Ovary (tissue), 10 donors: ENCODE measurements at regions of chr21 and their contacts with region 1.

Region 1: DNA sequence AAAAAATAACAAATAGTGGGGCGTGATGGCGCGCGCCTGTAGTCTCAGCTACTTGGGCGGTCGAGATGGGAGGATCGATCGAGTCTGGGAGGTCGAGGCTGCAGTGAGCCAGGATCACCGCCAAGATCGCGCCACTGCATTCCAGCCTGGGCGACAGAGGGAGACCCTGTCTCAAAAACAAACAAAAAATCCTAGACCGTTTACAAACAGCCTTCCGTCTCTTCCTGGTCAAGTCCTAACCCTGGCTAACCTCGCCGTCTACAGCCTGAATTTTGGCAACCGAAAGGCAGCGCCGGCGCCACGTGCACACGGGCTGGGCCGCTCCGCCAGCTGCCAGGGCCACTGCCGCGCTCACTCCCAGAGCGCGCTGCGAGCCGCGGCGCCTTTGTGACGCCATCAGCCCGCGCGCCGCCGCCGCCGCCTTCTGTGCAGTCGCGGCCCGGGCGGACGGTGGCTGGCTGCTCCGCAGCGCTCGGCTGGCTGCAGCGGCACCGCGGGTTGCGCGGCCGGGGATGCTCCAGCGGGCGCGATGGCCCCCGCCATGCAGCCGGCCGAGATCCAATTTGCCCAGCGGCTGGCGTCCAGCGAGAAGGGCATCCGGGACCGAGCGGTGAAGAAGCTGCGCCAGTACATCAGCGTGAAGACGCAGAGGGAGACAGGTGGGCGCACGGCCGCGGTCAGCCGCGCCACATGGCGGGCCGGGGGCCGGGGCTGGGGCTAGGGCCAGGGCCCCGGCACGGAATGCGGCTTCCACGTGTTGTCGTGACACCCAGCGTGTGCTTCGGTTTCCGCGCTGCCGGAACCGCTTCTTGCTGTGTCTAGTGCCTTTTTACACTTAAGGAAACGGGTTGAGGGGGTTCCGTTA is at the starts of genes HSF2BP and RRP1B:
- DNase-seq: peak; percentile 78 to 90 (median 83)
- H3K4me3 ChIP-seq: peak within 1 kb of the TSS; percentile 59
- H3K27ac ChIP-seq: peak within 1 kb of the TSS; percentile 2 to 87
- H3K4me1 ChIP-seq: no peaks in the 10 kb centered on the region
- H3K27me3 ChIP-seq: no peaks in the 10 kb centered on the region
- CTCF ChIP-seq: peak in 2 of 3 donors; percentile 33 to 38
- EP300 ChIP-seq: no peak
- POLR2A ChIP-seq: peak; percentile 64
- total RNA-seq, gene HSF2BP: 0.69 to 2.9 (median 1.5) TPM
- total RNA-seq, gene RRP1B: 17.3 to 31.8 (median 29.0) TPM

Region 2: GRCh38 chr21:42467140-42467983 is 1192.0 kb before region 1 on chr21:
- intact Hi-C with region 1: no loop called
- DNase-seq: no peak
- H3K4me3 ChIP-seq: no peak overlapping the region
- H3K27ac ChIP-seq: no peak overlapping the region
- H3K4me1 ChIP-seq: no peaks in the 10 kb centered on the region
- H3K27me3 ChIP-seq: no peaks in the 10 kb centered on the region
- CTCF ChIP-seq: no peak
- EP300 ChIP-seq: no peak
- POLR2A ChIP-seq: no peak

Region 3: GRCh38 chr21:43949499-43950208 is 290.3 kb after region 1 on chr21:
- intact Hi-C with region 1: loop called in 1 of 4 experiments (anchors 5 kb)
- DNase-seq: no peak
- H3K4me3 ChIP-seq: no peak overlapping the region
- H3K27ac ChIP-seq: no peak overlapping the region
- H3K4me1 ChIP-seq: no peaks in the 10 kb centered on the region
- H3K27me3 ChIP-seq: no peaks in the 10 kb centered on the region
- CTCF ChIP-seq: no peak
- EP300 ChIP-seq: no peak
- POLR2A ChIP-seq: no peak

Region 4: DNA sequence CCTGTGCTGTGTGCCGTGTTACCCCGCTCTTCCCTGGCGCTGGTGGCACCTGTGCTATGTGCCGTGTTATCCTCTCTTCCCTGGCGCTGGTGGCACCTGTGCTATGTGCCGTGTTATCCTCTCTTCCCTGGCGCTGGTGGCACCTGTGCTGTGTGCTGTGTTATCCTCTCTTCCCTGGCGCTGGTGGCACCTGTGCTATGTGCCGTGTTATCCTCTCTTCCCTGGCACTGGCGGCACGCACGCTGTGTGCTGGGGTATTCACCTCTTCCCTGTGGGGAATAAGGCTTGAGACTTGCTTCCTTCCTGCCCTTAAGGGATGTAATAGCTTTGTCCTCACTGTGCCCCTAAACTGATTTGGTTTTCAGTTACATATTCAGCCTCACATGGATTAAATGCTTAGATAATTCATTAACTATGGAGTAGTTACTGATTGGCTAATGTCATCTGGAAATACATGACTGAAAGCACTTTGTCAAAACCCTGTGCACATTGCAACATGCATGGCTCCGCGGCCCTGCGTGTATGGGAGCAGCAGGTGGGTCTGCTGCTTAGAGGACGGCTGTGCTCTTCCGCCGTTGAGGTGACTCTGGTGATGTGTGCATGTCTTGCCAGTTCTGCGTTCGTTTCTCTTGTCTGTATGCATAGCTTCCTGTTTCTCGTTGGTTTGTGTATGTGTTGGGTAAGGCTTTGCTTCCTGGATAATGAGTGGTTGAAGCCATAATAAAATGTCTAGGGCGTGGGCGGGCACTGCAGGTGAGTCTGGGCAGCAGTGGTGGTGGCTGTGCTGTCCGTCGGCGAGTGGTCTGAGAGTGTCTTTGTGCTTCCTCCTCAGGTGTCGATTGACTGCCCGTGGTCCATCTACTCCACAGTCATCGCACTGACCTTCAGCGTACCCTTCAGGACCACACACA is 429.9 kb after region 1 on chr21:
- intact Hi-C with region 1: no loop called
- DNase-seq: no peak
- H3K4me3 ChIP-seq: no peak overlapping the region
- H3K27ac ChIP-seq: no peak overlapping the region
- H3K4me1 ChIP-seq: no peaks in the 10 kb centered on the region
- H3K27me3 ChIP-seq: no peaks in the 10 kb centered on the region
- CTCF ChIP-seq: no peak
- EP300 ChIP-seq: no peak
- POLR2A ChIP-seq: no peak